Activated naive CD4-positive, alpha-beta T cell treated with anti-CD3 and anti-CD28 coated beads for 36 hours (primary cell): ENCODE measurements at regions of chr13 and their contacts with region 1.

Region 1: GRCh38 chr13:50037788-50038187 is 22.5 kb downstream of the KCNRG start:
- DNase-seq: no peak
- H3K4me3 Mint-ChIP-seq: no peak overlapping the region
- H3K27ac Mint-ChIP-seq: no peak overlapping the region
- H3K4me1 Mint-ChIP-seq: no peaks in the 10 kb centered on the region
- H3K27me3 Mint-ChIP-seq: no peaks in the 10 kb centered on the region

Region 2: GRCh38 chr13:50074843-50075242 is 37.1 kb after region 1 on chr13:
- CTCF ChIA-PET with region 1: no interaction called
- intact Hi-C with region 1: loop called (anchors 5 kb)
- DNase-seq: no peak
- H3K4me3 Mint-ChIP-seq: no peak overlapping the region
- H3K27ac Mint-ChIP-seq: no peak overlapping the region
- H3K4me1 Mint-ChIP-seq: peaks cover 16% of the 10 kb centered on the region
- H3K27me3 Mint-ChIP-seq: peaks cover 16% of the 10 kb centered on the region

Region 3: GRCh38 chr13:50152655-50153309 is 115.0 kb after region 1 on chr13:
- CTCF ChIA-PET with region 1: no interaction called
- intact Hi-C with region 1: no loop called
- DNase-seq: no peak
- H3K4me3 Mint-ChIP-seq: peak overlapping the region; percentile 17
- H3K27ac Mint-ChIP-seq: no peak overlapping the region
- H3K4me1 Mint-ChIP-seq: peaks cover 14% of the 10 kb centered on the region
- H3K27me3 Mint-ChIP-seq: peaks cover 7% of the 10 kb centered on the region